ENCODE measurements at regions of chr12 and their contacts with region 1.

Region 1: DNA sequence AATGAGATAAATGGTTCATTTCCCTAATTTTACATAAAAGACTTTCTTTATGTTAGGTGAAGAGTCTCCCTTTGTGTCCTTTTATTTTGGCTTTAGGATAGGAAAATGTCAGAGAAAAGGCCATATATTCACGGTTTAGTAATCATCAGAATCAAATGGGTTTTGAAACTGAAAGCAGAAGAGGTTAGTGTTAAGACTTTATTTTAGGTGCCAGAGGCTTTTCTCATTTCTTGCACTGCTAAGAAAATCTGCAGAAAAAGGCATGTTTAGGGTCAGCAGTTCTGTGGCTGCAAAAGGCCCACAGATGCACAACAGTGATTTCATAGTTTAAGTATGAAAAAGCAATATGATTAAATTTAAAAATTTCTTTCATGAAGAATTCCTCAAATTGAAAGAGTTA is 80.4 kb upstream of the SINHCAF start:
- H3K4me3 Mint-ChIP-seq: no peak overlapping the region
- H3K27ac Mint-ChIP-seq: no peak overlapping the region
- H3K4me1 Mint-ChIP-seq: no peaks in the 10 kb centered on the region
- H3K27me3 Mint-ChIP-seq: no peaks in the 10 kb centered on the region

Region 2: GRCh38 chr12:31603546-31604009 is 197.2 kb after region 1 on chr12:
- intact Hi-C with region 1: no loop called
- H3K4me3 Mint-ChIP-seq: no peak overlapping the region
- H3K27ac Mint-ChIP-seq: no peak overlapping the region
- H3K4me1 Mint-ChIP-seq: no peaks in the 10 kb centered on the region
- H3K27me3 Mint-ChIP-seq: no peaks in the 10 kb centered on the region

Region 3: GRCh38 chr12:32305163-32305562 is 898.8 kb after region 1 on chr12:
- intact Hi-C with region 1: loop called (anchors 5 kb)
- H3K4me3 Mint-ChIP-seq: no peak overlapping the region
- H3K27ac Mint-ChIP-seq: no peak overlapping the region
- H3K4me1 Mint-ChIP-seq: no peaks in the 10 kb centered on the region
- H3K27me3 Mint-ChIP-seq: no peaks in the 10 kb centered on the region